ENCODE measurements at regions of chr10 and their contacts with region 1.

Region 1: DNA sequence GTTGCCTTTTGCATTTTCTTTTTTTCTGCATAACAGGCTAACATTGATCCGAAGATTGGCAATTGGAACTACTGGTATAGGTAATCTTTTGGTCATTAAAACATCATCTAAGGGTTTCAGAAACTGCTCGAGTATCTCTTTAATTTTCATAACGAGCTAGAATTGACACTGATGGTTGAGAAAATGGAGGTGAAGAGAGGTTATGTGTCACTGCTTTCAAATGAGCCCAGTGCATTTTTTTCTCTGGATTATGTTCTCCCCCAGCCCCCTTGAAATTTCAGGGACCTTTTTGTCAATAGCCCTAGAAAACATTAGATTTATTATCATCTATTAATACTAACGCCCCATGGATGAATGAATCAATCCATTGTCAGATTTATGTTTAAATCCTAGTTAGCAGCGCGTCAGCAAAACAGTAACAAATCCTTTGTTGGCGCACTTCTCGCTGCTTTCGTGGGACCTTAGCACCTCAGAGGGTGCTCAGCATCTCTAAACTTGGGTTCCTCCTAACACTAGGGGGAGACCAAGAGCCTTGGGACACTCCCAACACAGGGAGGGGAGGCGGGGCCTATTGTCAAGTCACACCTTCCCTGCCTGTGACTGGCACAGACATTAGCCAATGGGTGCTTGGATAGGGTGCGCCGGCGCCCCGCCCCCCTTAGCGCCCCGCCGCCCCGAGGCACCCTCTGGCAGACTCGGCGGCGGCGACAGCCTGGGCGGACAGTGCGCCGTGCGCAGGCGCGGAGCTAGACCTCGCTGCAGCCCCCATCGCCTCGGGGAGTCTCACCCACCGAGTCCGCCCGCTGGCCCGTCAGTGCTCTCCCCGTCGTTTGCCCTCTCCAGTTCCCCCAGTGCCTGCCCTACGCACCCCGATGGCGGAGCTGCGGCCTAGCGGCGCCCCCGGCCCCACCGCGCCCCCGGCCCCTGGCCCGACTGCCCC is at the start of gene SUFU:
- DNase-seq: peak; percentile 99
- H3K4me3 ChIP-seq: peak within 1 kb of the TSS; percentile 82 to 98 (median 88)
- H3K27ac ChIP-seq: peak within 1 kb of the TSS; percentile 89 to 98 (median 97)
- H3K4me1 ChIP-seq: peaks cover 41 to 71% (median 64%) of the 10 kb centered on the region in 4 donors
- H3K27me3 ChIP-seq: no peaks in the 10 kb centered on the region
- CTCF ChIP-seq: peak; percentile 84 to 90 (median 89)
- EP300 ChIP-seq: no peak
- POLR2A ChIP-seq: no peak
- total RNA-seq, gene SUFU: 5.0 to 11.7 (median 10.1) TPM

Region 2: GRCh38 chr10:102151774-102152544 is 351.6 kb before region 1 on chr10 and contains the start of gene NOLC1:
- intact Hi-C with region 1: loop called (anchors 10 kb)
- DNase-seq: peak; percentile 100
- H3K4me3 ChIP-seq: peak within 1 kb of the TSS; percentile 73 to 89 (median 86)
- H3K27ac ChIP-seq: peak within 1 kb of the TSS; percentile 83 to 98 (median 90)
- H3K4me1 ChIP-seq: peaks cover 24 to 34% (median 28%) of the 10 kb centered on the region in 4 donors
- H3K27me3 ChIP-seq: no peaks in the 10 kb centered on the region
- CTCF ChIP-seq: peak in 1 of 3 experiments; percentile 18
- EP300 ChIP-seq: peak; percentile 92
- POLR2A ChIP-seq: peak; percentile 60
- total RNA-seq, gene NOLC1: 28.7 to 83.8 (median 48.5) TPM

Region 3: DNA sequence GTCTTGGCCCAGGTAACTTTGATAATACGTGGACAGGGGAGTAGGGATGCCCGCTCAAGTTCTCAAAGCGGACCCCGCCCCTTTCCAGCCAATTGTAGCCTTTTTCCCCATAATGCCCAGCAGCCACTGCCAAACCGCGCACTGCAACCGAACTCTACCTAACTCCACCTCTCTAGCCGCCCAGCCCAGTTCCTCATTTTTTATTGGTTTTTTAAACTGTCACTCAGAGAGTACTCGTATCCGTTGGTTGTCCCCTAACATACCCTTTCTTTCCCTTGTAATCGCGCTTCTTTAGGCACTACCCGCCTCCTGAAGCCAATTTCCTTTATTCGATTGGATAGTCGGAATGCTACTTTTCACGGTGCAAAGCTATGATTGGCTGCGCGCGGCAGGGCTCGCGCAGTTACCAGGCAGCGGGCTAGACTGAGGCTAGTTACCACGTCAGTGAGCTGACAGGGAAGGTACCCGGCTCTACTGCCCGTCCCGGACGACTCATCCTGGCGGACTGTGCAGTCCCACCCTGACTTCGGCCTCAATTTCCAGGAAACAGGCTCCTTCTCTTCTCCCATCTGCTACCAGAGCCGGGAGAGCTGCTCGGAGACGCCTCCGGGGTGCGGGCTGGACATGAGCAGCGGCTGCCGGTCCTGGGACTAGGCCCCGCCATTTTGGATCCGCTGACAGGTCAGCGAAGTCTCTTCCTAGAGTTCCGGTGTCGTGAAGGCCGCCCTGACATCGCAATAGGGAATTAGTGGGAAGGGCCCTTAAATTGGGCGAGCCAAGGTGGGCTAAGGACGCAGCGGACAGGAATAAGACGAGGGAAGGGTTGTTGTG is 258.2 kb before region 1 on chr10 and contains the start of gene GBF1:
- intact Hi-C with region 1: no loop called
- DNase-seq: peak; percentile 98
- H3K4me3 ChIP-seq: peak within 1 kb of the TSS; percentile 64 to 96 (median 84)
- H3K27ac ChIP-seq: peak within 1 kb of the TSS; percentile 86 to 91 (median 88)
- H3K4me1 ChIP-seq: peaks cover 46 to 82% (median 65%) of the 10 kb centered on the region in 4 donors
- H3K27me3 ChIP-seq: peaks cover 0 to 9% (median 0%) of the 10 kb centered on the region in 4 donors
- CTCF ChIP-seq: no peak
- EP300 ChIP-seq: no peak
- POLR2A ChIP-seq: peak; percentile 94
- total RNA-seq, gene GBF1: 33.1 to 52.4 (median 40.0) TPM

Region 4: GRCh38 chr10:102615361-102615760 is 111.8 kb after region 1 on chr10:
- intact Hi-C with region 1: no loop called
- DNase-seq: no peak
- H3K4me3 ChIP-seq: no peak overlapping the region
- H3K27ac ChIP-seq: peak overlapping the region; percentile 54 to 63 (median 58)
- H3K4me1 ChIP-seq: peaks cover 79 to 98% (median 95%) of the 10 kb centered on the region in 4 donors
- H3K27me3 ChIP-seq: no peaks in the 10 kb centered on the region
- CTCF ChIP-seq: peak in 1 of 3 experiments; percentile 12
- EP300 ChIP-seq: no peak
- POLR2A ChIP-seq: no peak

Region 5: DNA sequence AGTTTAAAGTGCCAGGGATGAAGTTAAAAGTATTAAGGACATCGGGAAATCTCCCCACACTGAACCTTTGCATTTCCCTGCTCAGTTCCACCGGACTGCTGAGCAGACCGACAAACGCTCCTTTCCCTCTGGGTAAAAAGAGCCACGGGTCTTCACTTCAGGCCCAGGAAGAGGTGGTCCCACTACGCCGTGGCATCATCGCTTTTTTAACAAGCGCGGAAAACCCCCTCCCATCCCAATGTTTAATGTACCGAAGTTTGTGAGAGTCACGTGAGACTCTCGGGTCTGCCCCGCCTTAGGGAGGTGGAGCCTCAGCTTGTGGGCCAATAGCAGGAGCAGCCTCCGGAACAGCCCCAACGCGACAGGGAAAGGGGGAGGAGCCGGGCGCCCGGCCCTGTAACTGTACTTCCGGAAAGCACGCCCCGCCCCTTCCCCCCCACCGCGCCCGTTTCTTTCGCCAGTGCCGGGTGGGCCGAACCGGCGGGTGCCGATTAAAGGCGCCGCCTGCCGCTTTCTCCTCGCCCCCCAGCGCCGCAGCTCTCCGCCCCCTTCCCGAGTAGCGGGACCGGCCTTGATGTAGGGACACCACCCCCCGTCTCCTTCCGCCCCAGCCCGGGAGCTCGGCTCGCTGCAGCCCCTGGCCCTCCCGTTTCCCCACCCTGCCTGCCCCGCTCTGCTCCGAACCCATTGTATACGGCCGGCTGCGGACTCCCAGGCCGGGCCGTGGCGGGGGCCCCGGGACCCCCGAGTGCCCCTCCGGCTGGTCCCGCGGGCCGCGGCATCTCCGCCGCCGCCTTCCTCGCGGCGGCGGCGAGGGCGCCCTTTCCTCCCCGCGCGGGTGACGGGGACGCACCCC is 138.6 kb after region 1 on chr10:
- intact Hi-C with region 1: loop called (anchors 5 kb)
- DNase-seq: peak; percentile 100
- H3K4me3 ChIP-seq: peak overlapping the region; percentile 76 to 97 (median 88)
- H3K27ac ChIP-seq: peak overlapping the region; percentile 99 to 100 (median 100)
- H3K4me1 ChIP-seq: peaks cover 10 to 26% (median 21%) of the 10 kb centered on the region in 4 donors
- H3K27me3 ChIP-seq: no peaks in the 10 kb centered on the region
- CTCF ChIP-seq: no peak
- EP300 ChIP-seq: no peak
- POLR2A ChIP-seq: peak; percentile 87

Measured in esophagus muscularis mucosa (tissue), 4 donors.